ENCODE measurements at regions of chr11 and their contacts with region 1.

Region 1: DNA sequence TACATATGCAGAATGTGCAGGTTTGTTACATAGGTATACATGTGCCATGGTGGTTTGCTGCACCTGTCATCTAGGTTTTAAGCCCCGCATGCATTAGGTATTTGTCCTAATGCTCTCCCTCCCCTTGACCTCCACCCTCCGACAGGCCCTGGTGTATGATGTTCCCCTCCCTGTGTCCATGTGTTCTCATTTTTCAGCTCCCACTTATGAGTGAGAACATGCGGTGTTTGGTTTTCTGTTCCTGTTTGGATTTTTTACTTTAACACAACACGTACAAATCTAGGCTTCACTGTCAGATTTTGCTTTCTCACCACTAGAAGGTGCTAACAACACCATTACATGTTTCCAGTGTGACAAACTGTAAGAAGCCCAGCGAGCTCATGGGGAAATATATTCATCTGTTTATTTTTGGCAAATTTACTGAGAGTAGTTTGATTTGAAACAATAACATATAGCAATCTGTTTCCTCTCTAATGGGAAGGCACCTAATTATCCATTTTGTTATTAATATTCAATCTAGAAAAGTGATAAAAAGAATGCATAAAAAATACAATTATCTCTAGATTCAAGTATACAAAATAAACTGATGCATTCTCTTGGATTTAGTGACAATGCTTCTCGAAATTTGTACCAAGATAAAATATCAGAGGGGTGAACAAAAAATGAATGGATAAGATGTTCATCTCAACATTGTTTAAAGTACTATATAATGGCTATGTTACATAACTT is 23.2 kb upstream of the BIRC3 start:
- DNase-seq: no peak
- ATAC-seq: peak; percentile 89

Region 2: GRCh38 chr11:102346748-102347461 is 52.9 kb after region 1 on chr11 and contains the start of gene BIRC2:
- intact Hi-C with region 1: loop called in 1 of 2 experiments (anchors 10 kb)
- DNase-seq: peak; percentile 88 to 98
- ATAC-seq: peak; percentile 95
- total RNA-seq, gene BIRC2: 46.9 to 50.7 TPM